Right cardiac atrium (tissue), 5 donors: ENCODE measurements at regions of chr17 and their contacts with region 1.

Region 1: DNA sequence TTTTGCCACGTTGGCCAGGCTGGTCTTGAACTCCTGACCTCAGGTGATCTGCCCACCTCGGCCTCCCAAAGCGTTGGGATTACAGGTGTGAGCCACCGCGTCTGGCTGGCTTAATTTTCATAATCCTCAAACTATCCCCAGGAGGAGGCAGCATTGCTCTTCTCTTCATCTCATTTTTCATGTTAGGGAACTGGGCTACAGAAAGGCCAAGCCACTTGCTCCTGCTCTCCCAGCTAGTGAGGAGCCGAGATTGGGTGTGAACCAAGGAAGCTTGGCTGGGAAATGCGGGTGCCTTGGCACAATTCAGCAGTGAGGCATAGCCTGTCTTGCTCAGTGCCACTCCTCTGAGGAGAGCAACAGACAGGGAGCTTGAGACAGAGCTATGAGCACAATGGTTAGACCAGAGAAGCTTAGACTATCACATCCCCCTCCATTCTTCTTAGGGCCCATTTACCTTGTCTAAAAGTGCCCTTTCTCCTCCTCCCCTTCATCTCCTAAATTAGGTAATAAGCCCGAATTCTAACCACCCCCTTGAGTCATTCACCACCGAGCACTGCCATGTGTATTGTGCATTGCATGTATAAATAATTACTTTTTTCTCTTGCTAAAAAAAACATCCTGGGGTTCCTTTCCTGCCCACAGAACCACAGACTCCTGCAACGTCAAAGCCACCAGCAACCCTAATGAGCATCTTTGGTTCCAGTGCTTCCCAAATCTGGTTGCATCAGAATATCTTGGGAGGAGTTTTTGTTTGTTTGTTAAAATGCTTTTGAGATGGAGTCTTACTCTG is 20.0 kb upstream of the KIF19 start:
- DNase-seq: peak in 1 of 3 donors; percentile 6
- ATAC-seq: no peak
- H3K4me3 ChIP-seq: no peak overlapping the region
- H3K27ac ChIP-seq: no peak overlapping the region
- H3K4me1 ChIP-seq: no peaks in the 10 kb centered on the region
- H3K27me3 ChIP-seq: no peaks in the 10 kb centered on the region

Region 2: GRCh38 chr17:74165797-74166365 is 140.2 kb before region 1 on chr17:
- intact Hi-C with region 1: no loop called
- DNase-seq: no peak
- ATAC-seq: no peak
- H3K4me3 ChIP-seq: no peak overlapping the region
- H3K27ac ChIP-seq: no peak overlapping the region
- H3K4me1 ChIP-seq: no peaks in the 10 kb centered on the region
- H3K27me3 ChIP-seq: peaks cover 2% of the 10 kb centered on the region

Region 3: GRCh38 chr17:74212913-74213791 is 92.9 kb before region 1 on chr17 and contains the start of gene TTYH2:
- intact Hi-C with region 1: loop called in 1 of 4 experiments (anchors 5 kb)
- DNase-seq: peak; percentile 90 to 95 (median 95)
- ATAC-seq: peak; percentile 85 to 90
- H3K4me3 ChIP-seq: peak within 1 kb of the TSS; percentile 62
- H3K27ac ChIP-seq: peak within 1 kb of the TSS; percentile 86
- H3K4me1 ChIP-seq: peaks cover 7% of the 10 kb centered on the region
- H3K27me3 ChIP-seq: no peaks in the 10 kb centered on the region
- total RNA-seq, gene TTYH2: 16.7 to 30.4 (median 24.9) TPM

Region 4: DNA sequence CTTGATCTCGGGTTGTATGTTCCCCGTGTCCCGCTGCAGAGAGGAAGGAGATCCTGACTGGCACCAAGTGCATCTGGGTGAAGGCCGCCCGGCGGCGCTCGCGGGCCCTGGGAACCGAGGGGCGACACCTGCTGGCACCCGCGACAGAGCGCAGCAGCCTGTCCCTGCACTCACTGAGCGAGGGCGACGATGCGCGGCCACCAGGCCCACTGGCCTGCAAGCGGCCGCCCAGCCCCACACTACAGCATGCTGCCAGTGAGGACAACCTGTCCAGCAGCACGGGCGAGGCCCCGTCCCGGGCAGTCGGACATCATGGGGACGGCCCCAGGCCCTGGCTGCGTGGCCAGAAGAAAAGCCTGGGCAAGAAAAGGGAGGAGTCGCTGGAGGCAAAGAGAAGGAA is 48.1 kb after region 1 on chr17:
- intact Hi-C with region 1: loop called in 1 of 4 experiments (anchors 5 kb)
- DNase-seq: peak; percentile 55 to 78 (median 76)
- ATAC-seq: peak; percentile 17 to 43
- H3K4me3 ChIP-seq: no peak overlapping the region
- H3K27ac ChIP-seq: no peak overlapping the region
- H3K4me1 ChIP-seq: no peaks in the 10 kb centered on the region
- H3K27me3 ChIP-seq: no peaks in the 10 kb centered on the region

Region 5: GRCh38 chr17:74361230-74362068 is 55.4 kb after region 1 on chr17 and contains the start of gene BTBD17:
- intact Hi-C with region 1: loop called in 3 of 4 experiments (anchors 2 to 5 kb)
- DNase-seq: peak; percentile 58 to 88 (median 85)
- ATAC-seq: peak; percentile 80 to 85
- H3K4me3 ChIP-seq: no peak within 1 kb of the TSS
- H3K27ac ChIP-seq: no peak within 1 kb of the TSS
- H3K4me1 ChIP-seq: no peaks in the 10 kb centered on the region
- H3K27me3 ChIP-seq: no peaks in the 10 kb centered on the region
- total RNA-seq, gene BTBD17: not detected

Region 6: GRCh38 chr17:74457146-74457819 is 151.2 kb after region 1 on chr17:
- intact Hi-C with region 1: loop called in 2 of 4 experiments (anchors 10 kb)
- DNase-seq: peak; percentile 82 to 94 (median 93)
- ATAC-seq: peak in 1 of 2 donors; percentile 13
- H3K4me3 ChIP-seq: no peak overlapping the region
- H3K27ac ChIP-seq: no peak overlapping the region
- H3K4me1 ChIP-seq: peaks cover 15% of the 10 kb centered on the region
- H3K27me3 ChIP-seq: no peaks in the 10 kb centered on the region